CD8-positive, alpha-beta memory T cell (primary cell): ENCODE measurements at regions of chr12 and their contacts with region 1.

Region 1: GRCh38 chr12:107670999-107671643 is 14.5 kb upstream of the PWP1 start:
- DNase-seq: peak in 1 of 5 donors; percentile 7
- H3K4me3 ChIP-seq: no peak overlapping the region
- H3K4me3 Mint-ChIP-seq: no peak overlapping the region
- H3K27ac ChIP-seq: no peak overlapping the region
- H3K27ac Mint-ChIP-seq: peak overlapping the region in 2 of 8 donors; percentile 20 to 43
- H3K4me1 ChIP-seq: no peaks in the 10 kb centered on the region
- H3K4me1 Mint-ChIP-seq: peaks cover 2 to 5% (median 5%) of the 10 kb centered on the region in 3 donors
- H3K27me3 ChIP-seq: no peaks in the 10 kb centered on the region
- H3K27me3 Mint-ChIP-seq: peaks cover 14 to 40% of the 10 kb centered on the region in 2 donors

Region 2: GRCh38 chr12:107415071-107415470 is 256.1 kb before region 1 on chr12:
- CTCF ChIA-PET with region 1: no interaction called
- POLR2A ChIA-PET with region 1: no interaction called
- DNase-seq: no peak
- H3K4me3 ChIP-seq: no peak overlapping the region
- H3K4me3 Mint-ChIP-seq: no peak overlapping the region
- H3K27ac ChIP-seq: no peak overlapping the region
- H3K27ac Mint-ChIP-seq: no peak overlapping the region
- H3K4me1 ChIP-seq: no peaks in the 10 kb centered on the region
- H3K4me1 Mint-ChIP-seq: no peaks in the 10 kb centered on the region
- H3K27me3 ChIP-seq: no peaks in the 10 kb centered on the region
- H3K27me3 Mint-ChIP-seq: no peaks in the 10 kb centered on the region

Region 3: GRCh38 chr12:107564946-107565345 is 106.2 kb before region 1 on chr12:
- CTCF ChIA-PET with region 1: no interaction called
- POLR2A ChIA-PET with region 1: no interaction called
- DNase-seq: peak in 1 of 5 donors; percentile 7
- H3K4me3 ChIP-seq: no peak overlapping the region
- H3K4me3 Mint-ChIP-seq: no peak overlapping the region
- H3K27ac ChIP-seq: no peak overlapping the region
- H3K27ac Mint-ChIP-seq: no peak overlapping the region
- H3K4me1 ChIP-seq: no peaks in the 10 kb centered on the region
- H3K4me1 Mint-ChIP-seq: peaks cover 0 to 6% (median 5%) of the 10 kb centered on the region in 3 donors
- H3K27me3 ChIP-seq: no peaks in the 10 kb centered on the region
- H3K27me3 Mint-ChIP-seq: peaks cover 0 to 6% of the 10 kb centered on the region in 2 donors

Region 4: DNA sequence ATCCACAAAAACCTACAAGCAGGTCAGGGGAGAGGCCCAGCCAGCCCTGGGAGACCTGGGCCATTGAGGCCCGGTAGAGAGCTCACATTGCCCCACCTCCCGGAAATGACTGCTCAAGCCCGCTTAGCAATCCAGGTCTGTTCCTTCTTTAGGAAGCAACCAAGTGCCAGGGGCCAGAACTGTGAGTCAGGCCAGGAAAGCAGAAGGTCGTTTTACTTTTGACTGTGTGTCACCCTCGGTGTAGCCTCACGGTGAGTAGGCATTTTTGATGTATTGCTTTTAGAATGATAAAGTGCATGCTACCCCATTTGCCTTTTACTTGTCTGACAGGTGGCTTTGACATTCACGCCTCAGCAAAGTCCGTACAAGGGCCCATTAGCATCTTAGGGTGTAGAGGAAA is 10.9 kb before region 1 on chr12:
- CTCF ChIA-PET with region 1: interaction called, 12 read pairs
- POLR2A ChIA-PET with region 1: no interaction called
- DNase-seq: no peak
- H3K4me3 ChIP-seq: no peak overlapping the region
- H3K4me3 Mint-ChIP-seq: no peak overlapping the region
- H3K27ac ChIP-seq: no peak overlapping the region
- H3K27ac Mint-ChIP-seq: peak overlapping the region in 1 of 8 donors; percentile 41
- H3K4me1 ChIP-seq: no peaks in the 10 kb centered on the region
- H3K4me1 Mint-ChIP-seq: peaks cover 0 to 2% (median 0%) of the 10 kb centered on the region in 3 donors
- H3K27me3 ChIP-seq: no peaks in the 10 kb centered on the region
- H3K27me3 Mint-ChIP-seq: peaks cover 5 to 9% of the 10 kb centered on the region in 2 donors